ENCODE measurements at regions of chr9 and their contacts with region 1.

Region 1: GRCh38 chr9:128034821-128035764 is 32.0 kb downstream of the NAIF1 start:
- H3K4me3 ChIP-seq: no peak overlapping the region
- H3K27ac ChIP-seq: no peak overlapping the region
- H3K4me1 ChIP-seq: no peaks in the 10 kb centered on the region
- CTCF ChIP-seq: peak; percentile 51; the same call in 1 of the 2 replicates

Region 2: DNA sequence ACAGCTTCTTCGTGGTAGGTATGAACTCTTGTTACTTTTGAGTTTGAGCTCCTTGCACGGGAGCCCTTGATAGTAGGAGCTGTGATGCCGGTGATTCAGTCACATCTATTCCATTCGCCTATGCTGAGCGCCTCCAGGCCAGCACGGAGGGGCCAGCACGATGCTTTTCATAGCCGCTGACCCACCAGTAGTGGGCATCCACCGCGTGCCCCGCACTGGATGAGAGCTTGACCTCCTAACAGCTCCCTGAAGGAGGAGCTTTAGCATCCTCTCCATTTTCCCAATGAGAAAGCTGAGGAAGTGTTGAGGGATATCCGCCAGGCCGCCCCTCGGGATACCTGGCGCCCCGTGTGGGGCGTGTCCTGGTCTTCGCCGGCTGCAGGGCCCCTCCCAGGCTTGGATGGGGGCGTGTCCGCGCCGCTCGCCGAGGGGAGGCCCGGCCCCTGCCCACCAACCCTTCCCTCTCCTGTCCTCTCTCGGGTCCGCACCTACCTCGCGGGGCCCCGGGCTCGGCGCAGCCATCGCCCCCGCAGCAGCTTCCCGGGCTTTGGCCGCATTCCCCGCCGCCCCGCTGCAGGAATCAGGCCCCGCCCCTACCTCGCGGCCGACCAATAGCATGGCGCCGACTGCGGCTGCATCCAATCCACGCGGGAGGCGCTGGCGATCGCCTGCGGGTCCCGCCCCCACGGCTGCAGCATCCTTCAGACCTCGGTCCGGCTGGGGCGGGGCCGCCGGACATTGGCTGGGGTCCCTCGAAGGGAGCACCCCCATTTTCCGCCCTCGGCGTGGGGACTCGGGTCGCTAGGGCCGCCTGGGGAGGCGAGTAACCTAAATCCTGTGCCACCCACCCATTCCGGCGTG is 104.6 kb before region 1 on chr9 and contains the start of gene PIP5KL1:
- CTCF ChIA-PET with region 1: interaction called, 20 read pairs
- POLR2A ChIA-PET with region 1: interaction called, 5 read pairs
- H3K4me3 ChIP-seq: peak within 1 kb of the TSS; percentile 55
- H3K27ac ChIP-seq: peak within 1 kb of the TSS; percentile 50
- H3K4me1 ChIP-seq: 0 out of 2 replicates have a peak, but pooled peaks cover 5% of the 10 kb centered on the region
- CTCF ChIP-seq: no peak

Region 3: DNA sequence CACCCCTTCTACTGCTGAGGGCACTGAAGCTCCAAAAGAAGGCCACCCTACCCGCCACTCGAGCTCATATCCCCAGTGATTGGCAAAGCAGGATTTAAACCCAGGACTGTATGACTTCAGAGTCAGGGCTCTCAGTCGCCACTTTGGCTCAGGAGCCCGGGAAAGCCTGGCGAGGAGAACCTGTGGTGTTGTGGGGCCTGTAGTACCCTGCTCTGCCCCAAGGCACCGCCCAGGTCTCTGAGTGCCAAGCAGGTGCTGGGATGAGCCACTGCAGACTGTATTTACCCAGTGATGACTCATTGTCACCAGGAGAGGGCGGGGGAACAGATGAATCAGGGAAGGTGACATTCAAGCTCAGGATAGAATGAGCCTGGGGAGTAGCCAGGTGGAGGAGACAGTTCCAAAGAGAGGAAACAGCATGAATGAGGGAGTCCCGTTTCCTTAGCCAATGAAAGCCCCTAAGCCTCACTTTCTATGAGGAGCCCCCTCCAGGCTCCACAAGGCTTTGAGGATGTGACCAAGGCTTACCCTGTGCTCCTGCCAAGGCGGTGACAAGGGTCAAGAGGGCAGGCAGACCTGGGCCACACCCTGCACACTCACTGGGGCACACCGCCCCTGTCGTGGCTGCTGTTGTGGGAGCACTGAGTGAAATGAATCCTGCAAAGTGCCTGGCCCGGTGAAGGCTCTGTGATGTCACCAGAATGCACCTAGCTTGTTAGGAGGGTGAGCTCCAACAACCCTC is 79.6 kb before region 1 on chr9:
- CTCF ChIA-PET with region 1: interaction called, 45 read pairs
- POLR2A ChIA-PET with region 1: no interaction called
- H3K4me3 ChIP-seq: no peak overlapping the region
- H3K27ac ChIP-seq: no peak overlapping the region; the same call in 1 of the 2 replicates
- H3K4me1 ChIP-seq: peaks cover 8% of the 10 kb centered on the region
- CTCF ChIP-seq: peak; percentile 58

Region 4: DNA sequence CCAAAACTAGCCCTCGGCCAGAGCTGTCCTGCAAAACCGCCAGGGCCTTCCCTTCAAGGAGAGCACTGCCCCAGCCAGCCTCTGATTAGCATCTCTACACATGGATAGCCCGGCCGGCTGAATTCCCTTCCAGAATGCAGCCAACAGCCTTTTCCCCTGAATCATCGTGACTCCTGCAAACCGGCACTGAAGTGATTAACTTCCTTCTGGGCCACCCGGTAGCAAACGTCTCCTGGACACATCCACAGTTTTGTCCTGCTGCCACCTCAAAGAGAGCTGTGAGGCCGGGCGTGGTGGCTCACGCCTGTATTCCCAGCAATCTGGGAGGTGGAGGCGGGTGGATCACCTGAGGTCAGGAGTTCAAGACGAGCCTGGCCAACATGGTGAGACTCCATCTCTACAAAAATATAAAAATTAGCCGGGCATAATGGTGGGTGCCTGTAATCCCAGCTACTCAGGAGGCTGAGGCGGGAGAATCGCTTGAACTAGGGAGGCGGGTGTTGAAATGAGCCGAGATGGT is 33.3 kb before region 1 on chr9:
- CTCF ChIA-PET with region 1: interaction called, 10 read pairs
- POLR2A ChIA-PET with region 1: no interaction called
- H3K4me3 ChIP-seq: no peak overlapping the region
- H3K27ac ChIP-seq: no peak overlapping the region
- H3K4me1 ChIP-seq: no peaks in the 10 kb centered on the region
- CTCF ChIP-seq: no peak

Region 5: GRCh38 chr9:128048663-128049062 is 13.6 kb after region 1 on chr9:
- CTCF ChIA-PET with region 1: interaction called, 16 read pairs
- POLR2A ChIA-PET with region 1: interaction called, 3 read pairs
- H3K4me3 ChIP-seq: no peak overlapping the region
- H3K27ac ChIP-seq: no peak overlapping the region
- H3K4me1 ChIP-seq: no peaks in the 10 kb centered on the region
- CTCF ChIP-seq: no peak

Region 6: DNA sequence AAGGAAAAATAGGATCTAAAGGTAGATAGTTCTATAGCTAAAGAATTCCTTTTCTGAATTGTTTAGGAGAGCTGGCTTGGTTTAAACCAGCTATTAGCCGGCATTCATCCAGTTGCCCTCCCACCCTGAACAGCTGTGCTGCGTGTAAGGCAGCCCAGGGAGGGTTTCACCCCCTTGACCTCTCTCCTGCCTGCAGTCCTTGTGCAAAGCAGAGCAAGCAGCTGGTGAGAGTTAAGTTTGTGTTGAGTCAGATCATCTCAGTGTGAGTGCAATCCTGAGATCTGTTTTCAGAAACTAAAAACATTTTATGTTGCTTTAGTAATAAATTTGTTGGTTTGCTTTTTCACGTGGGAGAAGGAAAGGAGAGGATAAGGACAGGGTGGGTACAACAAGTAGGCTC is 46.0 kb after region 1 on chr9:
- CTCF ChIA-PET with region 1: interaction called, 18 read pairs
- POLR2A ChIA-PET with region 1: no interaction called
- H3K4me3 ChIP-seq: no peak overlapping the region
- H3K27ac ChIP-seq: no peak overlapping the region
- H3K4me1 ChIP-seq: no peaks in the 10 kb centered on the region
- CTCF ChIP-seq: no peak

Region 7: GRCh38 chr9:128275996-128276573 is 241.0 kb after region 1 on chr9 and contains the starts of genes GOLGA2 and SWI5:
- CTCF ChIA-PET with region 1: no interaction called
- POLR2A ChIA-PET with region 1: no interaction called
- H3K4me3 ChIP-seq: peak within 1 kb of the TSS; percentile 83
- H3K27ac ChIP-seq: peak within 1 kb of the TSS; percentile 51; the same call in 1 of the 2 replicates
- H3K4me1 ChIP-seq: no peaks in the 10 kb centered on the region
- CTCF ChIP-seq: no peak

Measured in HEK293 (cell line).